CD8-positive, alpha-beta T cell (primary cell): ENCODE measurements at regions of chr16 and their contacts with region 1.

Region 1: DNA sequence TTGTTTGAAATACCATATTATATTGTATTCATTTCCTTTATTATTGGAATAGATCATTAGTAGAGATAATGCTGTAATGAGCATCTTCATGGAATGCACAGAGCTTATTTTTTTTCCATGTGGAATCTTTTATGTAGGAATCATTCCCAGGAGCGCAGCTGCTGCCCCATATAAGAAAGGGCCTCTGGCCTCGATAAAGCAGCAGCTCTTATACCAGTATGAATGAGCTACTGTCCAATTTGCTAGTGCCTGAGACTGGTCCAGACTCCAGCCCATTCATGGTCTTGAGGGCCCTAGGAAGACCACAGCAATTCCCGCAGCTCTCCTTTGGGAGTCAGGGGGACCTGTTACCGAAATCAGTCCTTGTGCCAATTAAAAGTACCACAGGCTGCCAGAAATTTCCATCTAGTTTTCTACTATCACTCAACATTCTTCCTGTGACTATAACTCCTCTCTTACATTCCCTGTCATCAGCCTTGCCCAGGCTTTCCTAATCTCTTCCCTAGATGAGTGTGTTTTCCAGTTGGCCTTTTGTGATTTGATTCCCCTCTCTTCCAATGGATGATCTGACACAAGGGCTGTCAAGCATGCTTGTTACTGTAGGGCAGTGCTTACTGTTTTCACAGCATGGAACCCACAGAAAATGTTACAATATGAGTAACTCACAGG is 1.9 kb downstream of the ZNF843 start:
- DNase-seq: no peak
- ATAC-seq: no peak
- H3K4me3 ChIP-seq: no peak overlapping the region
- H3K4me3 Mint-ChIP-seq: no peak overlapping the region
- H3K27ac ChIP-seq: no peak overlapping the region
- H3K27ac Mint-ChIP-seq: no peak overlapping the region
- H3K4me1 ChIP-seq: peaks cover 4% of the 10 kb centered on the region
- H3K4me1 Mint-ChIP-seq: peaks cover 6% of the 10 kb centered on the region
- H3K27me3 ChIP-seq: no peaks in the 10 kb centered on the region
- H3K27me3 Mint-ChIP-seq: no peaks in the 10 kb centered on the region
- CTCF ChIP-seq: no peak

Region 2: GRCh38 chr16:31202414-31203375 is 238.0 kb before region 1 on chr16 and contains the start of gene PYCARD:
- CTCF ChIA-PET with region 1: interaction called, 4 read pairs
- POLR2A ChIA-PET with region 1: no interaction called
- intact Hi-C with region 1: loop called in 1 of 2 experiments (anchors 5 kb)
- DNase-seq: peak in 5 of 9 experiments; percentile 21 to 59 (median 43)
- ATAC-seq: peak; percentile 24
- H3K4me3 ChIP-seq: peak within 1 kb of the TSS; percentile 93 to 96
- H3K4me3 Mint-ChIP-seq: peak within 1 kb of the TSS; percentile 91
- H3K27ac ChIP-seq: peak within 1 kb of the TSS; percentile 53 to 64
- H3K27ac Mint-ChIP-seq: peak within 1 kb of the TSS; percentile 88
- H3K4me1 ChIP-seq: peaks cover 46% of the 10 kb centered on the region
- H3K4me1 Mint-ChIP-seq: peaks cover 46% of the 10 kb centered on the region
- H3K27me3 ChIP-seq: no peaks in the 10 kb centered on the region
- H3K27me3 Mint-ChIP-seq: no peaks in the 10 kb centered on the region
- CTCF ChIP-seq: no peak
- total RNA-seq, gene PYCARD: 6.4 to 6.6 TPM

Region 3: GRCh38 chr16:31354394-31355291 is 86.0 kb before region 1 on chr16 and contains the start of gene ITGAX:
- CTCF ChIA-PET with region 1: no interaction called
- POLR2A ChIA-PET with region 1: no interaction called
- intact Hi-C with region 1: loop called in 1 of 2 experiments (anchors 10 kb)
- DNase-seq: peak; percentile 25 to 86 (median 59)
- ATAC-seq: peak; percentile 88
- H3K4me3 ChIP-seq: peak within 1 kb of the TSS in 1 of 2 experiments; percentile 13
- H3K4me3 Mint-ChIP-seq: peak within 1 kb of the TSS; percentile 66
- H3K27ac ChIP-seq: peak within 1 kb of the TSS in 1 of 2 experiments; percentile 55
- H3K27ac Mint-ChIP-seq: peak within 1 kb of the TSS; percentile 93
- H3K4me1 ChIP-seq: peaks cover 30% of the 10 kb centered on the region
- H3K4me1 Mint-ChIP-seq: peaks cover 46% of the 10 kb centered on the region
- H3K27me3 ChIP-seq: no peaks in the 10 kb centered on the region
- H3K27me3 Mint-ChIP-seq: no peaks in the 10 kb centered on the region
- CTCF ChIP-seq: no peak
- total RNA-seq, gene ITGAX: 1.7 to 2.3 TPM

Region 4: GRCh38 chr16:31382485-31383161 is 58.0 kb before region 1 on chr16:
- CTCF ChIA-PET with region 1: no interaction called
- POLR2A ChIA-PET with region 1: no interaction called
- intact Hi-C with region 1: loop called in 1 of 2 experiments (anchors 2 kb)
- DNase-seq: peak; percentile 35 to 81 (median 66)
- ATAC-seq: peak; percentile 60
- H3K4me3 ChIP-seq: no peak overlapping the region
- H3K4me3 Mint-ChIP-seq: no peak overlapping the region
- H3K27ac ChIP-seq: no peak overlapping the region
- H3K27ac Mint-ChIP-seq: no peak overlapping the region
- H3K4me1 ChIP-seq: peaks cover 1% of the 10 kb centered on the region
- H3K4me1 Mint-ChIP-seq: peaks cover 9% of the 10 kb centered on the region
- H3K27me3 ChIP-seq: no peaks in the 10 kb centered on the region
- H3K27me3 Mint-ChIP-seq: peaks cover 4% of the 10 kb centered on the region
- CTCF ChIP-seq: peak; percentile 72

Region 5: DNA sequence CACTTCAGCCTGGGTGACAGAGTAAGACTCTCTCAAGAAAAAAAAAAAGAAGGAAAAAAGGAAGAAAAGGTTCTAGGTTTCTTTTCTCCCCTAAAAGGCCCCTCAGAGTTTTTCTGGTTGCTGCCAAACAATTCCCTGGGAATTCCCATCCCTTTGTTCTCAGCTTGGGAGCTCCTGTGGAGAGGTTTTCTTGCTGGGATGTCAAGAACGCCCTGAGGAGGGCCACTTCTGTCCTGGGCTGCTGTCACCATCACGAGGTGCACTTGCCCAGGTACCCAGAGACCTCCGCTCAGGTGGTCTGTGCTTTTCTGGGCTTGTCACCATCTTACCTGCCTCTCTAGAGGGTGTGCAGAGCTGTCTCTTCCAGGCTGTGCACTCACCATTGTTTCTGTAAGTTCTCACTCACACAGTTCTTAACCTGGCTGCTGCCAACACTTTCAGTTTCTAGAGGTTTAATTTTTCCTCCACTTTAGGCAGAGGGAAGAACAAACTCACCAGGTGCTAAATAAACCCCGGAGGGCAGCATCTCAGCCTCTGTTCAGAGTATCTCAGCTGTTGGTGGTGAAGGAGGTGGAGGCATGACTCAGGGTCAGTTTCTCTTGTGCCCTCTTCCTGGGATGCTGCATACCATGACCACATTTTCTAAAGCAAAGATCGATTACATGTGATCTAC is 10.1 kb before region 1 on chr16:
- CTCF ChIA-PET with region 1: interaction called, 11 read pairs
- POLR2A ChIA-PET with region 1: no interaction called
- intact Hi-C with region 1: no loop called
- DNase-seq: no peak
- ATAC-seq: no peak
- H3K4me3 ChIP-seq: no peak overlapping the region
- H3K4me3 Mint-ChIP-seq: no peak overlapping the region
- H3K27ac ChIP-seq: no peak overlapping the region
- H3K27ac Mint-ChIP-seq: no peak overlapping the region
- H3K4me1 ChIP-seq: peaks cover 5% of the 10 kb centered on the region
- H3K4me1 Mint-ChIP-seq: no peaks in the 10 kb centered on the region
- H3K27me3 ChIP-seq: no peaks in the 10 kb centered on the region
- H3K27me3 Mint-ChIP-seq: no peaks in the 10 kb centered on the region
- CTCF ChIP-seq: no peak